Left colon (tissue), 2 donors: ENCODE measurements at regions of chr5 and their contacts with region 1.

Region 1: GRCh38 chr5:95781101-95781583 is 41.4 kb downstream of the GLRX start:
- DNase-seq: peak; percentile 79 to 85
- ATAC-seq: peak; percentile 93

Region 2: GRCh38 chr5:95646554-95647431 is 134.3 kb before region 1 on chr5 and contains the start of gene RFESD:
- intact Hi-C with region 1: loop called in 1 of 2 experiments (anchors 10 kb)
- DNase-seq: peak; percentile 100
- ATAC-seq: peak; percentile 94
- total RNA-seq, gene RFESD: 0.55 to 0.84 TPM